ENCODE measurements at regions of chr11 and their contacts with region 1.

Region 1: GRCh38 chr11:90288212-90288821 is 65.5 kb upstream of the CHORDC1 start:
- DNase-seq: peak; percentile 16
- ATAC-seq: peak; percentile 66; the same call in 1 of the 2 replicates
- H3K4me3 ChIP-seq: no peak overlapping the region
- H3K27ac ChIP-seq: no peak overlapping the region
- H3K4me1 ChIP-seq: no peaks in the 10 kb centered on the region
- H3K27me3 ChIP-seq: no peaks in the 10 kb centered on the region
- CTCF ChIP-seq: peak; percentile 45 to 71 (median 58); a peak in 5 of 6 replicates
- POLR2A ChIP-seq: no peak
- RAD21 ChIP-seq: peak; percentile 59

Region 2: GRCh38 chr11:90343673-90344072 is 55.4 kb after region 1 on chr11:
- CTCF ChIA-PET with region 1: no interaction called
- POLR2A ChIA-PET with region 1: no interaction called
- RAD21 ChIA-PET with region 1: no interaction called
- intact Hi-C with region 1: no loop called
- DNase-seq: no peak
- ATAC-seq: no peak
- H3K4me3 ChIP-seq: no peak overlapping the region
- H3K27ac ChIP-seq: no peak overlapping the region
- H3K4me1 ChIP-seq: no peaks in the 10 kb centered on the region
- H3K27me3 ChIP-seq: no peaks in the 10 kb centered on the region
- CTCF ChIP-seq: no peak
- POLR2A ChIP-seq: no peak
- RAD21 ChIP-seq: no peak

Region 3: GRCh38 chr11:90453525-90453924 is 165.2 kb after region 1 on chr11:
- CTCF ChIA-PET with region 1: no interaction called
- POLR2A ChIA-PET with region 1: no interaction called
- RAD21 ChIA-PET with region 1: no interaction called
- intact Hi-C with region 1: loop called (anchors 2 kb)
- DNase-seq: no peak
- ATAC-seq: no peak
- H3K4me3 ChIP-seq: no peak overlapping the region
- H3K27ac ChIP-seq: no peak overlapping the region
- H3K4me1 ChIP-seq: no peaks in the 10 kb centered on the region
- H3K27me3 ChIP-seq: no peaks in the 10 kb centered on the region
- CTCF ChIP-seq: no peak
- POLR2A ChIP-seq: no peak
- RAD21 ChIP-seq: no peak

Region 4: GRCh38 chr11:90656171-90656570 is 367.9 kb after region 1 on chr11:
- CTCF ChIA-PET with region 1: no interaction called
- POLR2A ChIA-PET with region 1: no interaction called
- RAD21 ChIA-PET with region 1: no interaction called
- intact Hi-C with region 1: no loop called
- DNase-seq: no peak
- ATAC-seq: no peak
- H3K4me3 ChIP-seq: no peak overlapping the region
- H3K27ac ChIP-seq: no peak overlapping the region
- H3K4me1 ChIP-seq: no peaks in the 10 kb centered on the region
- H3K27me3 ChIP-seq: no peaks in the 10 kb centered on the region
- CTCF ChIP-seq: no peak
- POLR2A ChIP-seq: no peak
- RAD21 ChIP-seq: no peak

Region 5: GRCh38 chr11:91248199-91248807 is 960.0 kb after region 1 on chr11:
- CTCF ChIA-PET with region 1: no interaction called
- POLR2A ChIA-PET with region 1: no interaction called
- RAD21 ChIA-PET with region 1: no interaction called
- intact Hi-C with region 1: loop called (anchors 1 kb)
- DNase-seq: peak; percentile 4
- ATAC-seq: no peak
- H3K4me3 ChIP-seq: no peak overlapping the region
- H3K27ac ChIP-seq: no peak overlapping the region
- H3K4me1 ChIP-seq: no peaks in the 10 kb centered on the region
- H3K27me3 ChIP-seq: no peaks in the 10 kb centered on the region
- CTCF ChIP-seq: peak; percentile 13 to 72 (median 51); a peak in 5 of 6 replicates
- POLR2A ChIP-seq: no peak
- RAD21 ChIP-seq: peak; percentile 33; the same call in 1 of the 2 replicates

Measured in HCT116 (cell line).